BJ (cell line): ENCODE measurements at regions of chr12 and their contacts with region 1.

Region 1: GRCh38 chr12:89882050-89882449 is 173.4 kb upstream of the ATP2B1 start:
- DNase-seq: peak; percentile 37
- H3K4me3 ChIP-seq: no peak overlapping the region
- H3K27me3 ChIP-seq: no peaks in the 10 kb centered on the region
- CTCF ChIP-seq: no peak

Region 2: DNA sequence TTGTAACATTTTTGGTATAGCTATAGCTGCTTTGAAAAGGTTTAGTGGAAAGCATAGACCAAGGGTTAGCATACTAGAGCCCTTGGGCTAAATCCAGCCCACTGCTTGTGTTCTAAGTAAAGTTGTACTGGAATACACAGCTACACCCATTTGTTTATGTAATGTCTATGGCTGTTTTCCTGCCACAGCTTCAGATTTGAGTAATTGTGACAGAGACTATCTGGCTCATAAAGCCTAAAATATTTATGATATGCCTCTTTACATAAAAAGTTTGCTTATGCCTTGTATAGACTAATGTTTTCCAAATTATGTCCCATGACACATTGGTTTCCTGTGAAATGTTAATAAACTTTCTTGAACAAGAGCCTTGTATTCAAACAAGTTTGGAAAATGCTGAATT is 61.4 kb after region 1 on chr12:
- CTCF ChIA-PET with region 1: no interaction called
- POLR2A ChIA-PET with region 1: interaction called, 11 read pairs
- DNase-seq: no peak
- H3K4me3 ChIP-seq: no peak overlapping the region
- H3K27me3 ChIP-seq: no peaks in the 10 kb centered on the region
- CTCF ChIP-seq: no peak

Region 3: DNA sequence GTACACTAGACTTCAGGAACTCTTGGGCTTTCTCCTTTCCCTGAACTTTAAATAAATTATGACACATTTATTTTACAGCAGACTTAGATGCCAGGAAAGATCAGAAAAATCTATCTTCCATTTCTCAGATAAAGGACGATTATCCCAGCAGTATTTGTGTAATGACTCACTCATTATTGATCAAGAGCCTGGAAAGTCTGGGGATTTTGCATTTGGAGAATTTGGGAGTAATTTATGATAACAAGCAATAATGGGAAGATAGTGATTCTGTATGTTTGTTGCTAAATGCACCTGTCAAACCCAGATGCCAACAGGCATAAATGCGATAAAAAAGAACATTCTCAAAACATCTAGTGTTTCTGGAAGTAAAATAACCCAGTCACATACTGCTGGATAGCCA is 306.8 kb after region 1 on chr12:
- CTCF ChIA-PET with region 1: no interaction called
- POLR2A ChIA-PET with region 1: no interaction called
- DNase-seq: no peak
- H3K4me3 ChIP-seq: no peak overlapping the region
- H3K27me3 ChIP-seq: no peaks in the 10 kb centered on the region
- CTCF ChIP-seq: no peak